ENCODE measurements at regions of chr6 and their contacts with region 1.

Region 1: GRCh38 chr6:157021344-157021992 is 244.3 kb downstream of the ARID1B start:
- DNase-seq: peak; percentile 92 to 93
- ATAC-seq: peak; percentile 87

Region 2: GRCh38 chr6:156686995-156687788 is 334.3 kb before region 1 on chr6:
- intact Hi-C with region 1: loop called in 1 of 2 experiments (anchors 10 kb)
- DNase-seq: peak; percentile 89
- ATAC-seq: peak; percentile 88

Region 3: GRCh38 chr6:156776840-156777576 is 244.5 kb before region 1 on chr6 and contains the start of gene ARID1B:
- intact Hi-C with region 1: loop called in 1 of 2 experiments (anchors 10 kb)
- DNase-seq: peak; percentile 80 to 87
- ATAC-seq: peak; percentile 60
- total RNA-seq, gene ARID1B: 69.0 to 85.4 TPM

Region 4: GRCh38 chr6:157274471-157275226 is 253.2 kb after region 1 on chr6:
- intact Hi-C with region 1: loop called in 1 of 2 experiments (anchors 10 kb)
- DNase-seq: peak; percentile 54 to 80
- ATAC-seq: peak; percentile 93